WTC11 (cell line): ENCODE measurements at regions of chr22 and their contacts with region 1.

Region 1: GRCh38 chr22:46367707-46368191 is 32.2 kb downstream of the TRMU start:
- DNase-seq: peak; percentile 94
- ATAC-seq: peak; percentile 87
- H3K4me3 Mint-ChIP-seq: no peak overlapping the region
- H3K27ac Mint-ChIP-seq: no peak overlapping the region; the same call in 1 of the 2 replicates
- H3K4me1 Mint-ChIP-seq: peaks cover 6% of the 10 kb centered on the region; the same call in 1 of the 2 replicates
- H3K27me3 Mint-ChIP-seq: no peaks in the 10 kb centered on the region
- CTCF ChIP-seq: peak; percentile 85

Region 2: DNA sequence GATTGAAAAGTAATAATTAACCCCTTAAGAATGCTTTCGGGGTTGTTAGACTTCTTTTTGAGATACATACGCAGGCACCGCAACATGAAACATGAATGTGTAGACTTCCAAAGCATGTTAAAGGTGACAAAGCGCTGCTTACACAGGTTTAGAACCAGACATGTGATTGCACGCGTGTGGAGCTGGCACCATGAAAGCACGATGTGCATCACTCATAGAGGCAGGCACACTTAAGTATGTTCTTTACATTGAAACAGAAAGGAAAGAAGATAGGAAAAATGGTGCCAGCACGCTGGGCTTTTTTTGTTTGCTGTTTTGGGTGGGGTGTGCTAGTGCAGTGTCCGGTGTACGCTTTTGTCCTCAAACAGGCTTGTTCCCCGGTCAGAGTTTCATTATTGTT is 301.1 kb before region 1 on chr22:
- CTCF ChIA-PET with region 1: no interaction called
- POLR2A ChIA-PET with region 1: no interaction called
- DNase-seq: no peak
- ATAC-seq: no peak
- H3K4me3 Mint-ChIP-seq: no peak overlapping the region
- H3K27ac Mint-ChIP-seq: no peak overlapping the region
- H3K4me1 Mint-ChIP-seq: peaks cover 7% of the 10 kb centered on the region
- H3K27me3 Mint-ChIP-seq: peaks cover 73% of the 10 kb centered on the region
- CTCF ChIP-seq: no peak

Region 3: DNA sequence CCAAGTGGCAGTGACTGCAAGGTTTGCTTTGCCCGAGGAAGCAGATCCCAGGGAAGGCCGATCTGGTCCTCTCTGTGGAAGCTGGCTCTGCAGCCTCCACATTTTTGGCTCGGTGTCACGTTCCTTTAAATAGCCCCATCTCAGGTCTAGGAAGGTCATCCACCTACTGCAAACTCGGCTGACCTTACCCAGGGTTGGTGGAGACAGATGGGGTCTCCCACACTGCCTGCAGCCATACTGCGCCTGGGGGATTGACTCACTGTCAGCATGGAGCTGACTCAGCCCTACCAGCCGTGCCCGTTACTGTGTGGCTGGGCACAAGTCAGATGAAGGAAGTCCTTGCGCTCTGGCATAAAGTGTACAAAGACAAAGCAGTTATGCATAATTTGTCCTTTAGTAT is 134.5 kb before region 1 on chr22:
- CTCF ChIA-PET with region 1: no interaction called
- POLR2A ChIA-PET with region 1: no interaction called
- DNase-seq: no peak
- ATAC-seq: no peak
- H3K4me3 Mint-ChIP-seq: no peak overlapping the region
- H3K27ac Mint-ChIP-seq: 0 out of 2 replicates have a peak overlapping the region, but pooled peaks have one; percentile 18
- H3K4me1 Mint-ChIP-seq: no peaks in the 10 kb centered on the region
- H3K27me3 Mint-ChIP-seq: no peaks in the 10 kb centered on the region
- CTCF ChIP-seq: no peak

Region 4: GRCh38 chr22:46328782-46329181 is 39.0 kb before region 1 on chr22:
- CTCF ChIA-PET with region 1: no interaction called
- POLR2A ChIA-PET with region 1: no interaction called
- DNase-seq: no peak
- ATAC-seq: no peak
- H3K4me3 Mint-ChIP-seq: no peak overlapping the region
- H3K27ac Mint-ChIP-seq: no peak overlapping the region
- H3K4me1 Mint-ChIP-seq: 0 out of 2 replicates have a peak, but pooled peaks cover 3% of the 10 kb centered on the region
- H3K27me3 Mint-ChIP-seq: no peaks in the 10 kb centered on the region
- CTCF ChIP-seq: no peak

Region 5: DNA sequence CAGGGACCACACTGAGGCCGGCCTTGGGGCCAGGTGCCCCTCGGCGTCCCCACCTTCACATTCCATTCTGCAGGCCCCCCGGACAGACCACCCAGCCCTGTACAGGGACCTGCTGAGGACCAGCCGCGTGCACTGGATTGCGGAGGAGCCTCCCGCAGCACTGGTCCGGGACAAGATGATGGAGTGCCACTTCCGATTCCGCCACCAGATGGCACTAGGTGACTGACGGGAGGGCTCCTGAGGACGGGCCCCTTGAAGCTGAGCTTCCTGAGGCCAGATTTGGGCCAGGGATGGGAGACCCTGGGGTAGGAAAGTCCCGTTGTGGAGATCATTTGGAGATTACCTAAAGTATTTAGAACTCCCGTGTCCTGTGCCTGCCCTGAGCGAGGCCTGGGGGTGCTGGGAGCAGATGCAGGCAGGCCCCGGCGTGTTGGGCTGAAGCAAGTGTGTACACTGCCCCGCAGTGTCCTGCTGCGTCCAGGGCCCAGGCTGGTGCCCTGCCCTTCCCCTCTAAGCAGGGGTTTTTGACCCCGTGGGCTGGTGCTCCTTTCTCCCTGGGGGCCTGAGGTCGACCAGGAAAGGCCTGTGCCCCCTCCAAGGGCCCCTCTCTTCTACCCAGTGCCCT is 12.3 kb before region 1 on chr22:
- CTCF ChIA-PET with region 1: interaction called, 34 read pairs
- POLR2A ChIA-PET with region 1: interaction called, 4 read pairs
- DNase-seq: peak; percentile 92
- ATAC-seq: peak; percentile 82
- H3K4me3 Mint-ChIP-seq: no peak overlapping the region
- H3K27ac Mint-ChIP-seq: no peak overlapping the region
- H3K4me1 Mint-ChIP-seq: no peaks in the 10 kb centered on the region
- H3K27me3 Mint-ChIP-seq: no peaks in the 10 kb centered on the region
- CTCF ChIP-seq: peak; percentile 82

Region 6: GRCh38 chr22:46413725-46414379 is 46.1 kb after region 1 on chr22:
- CTCF ChIA-PET with region 1: interaction called, 10 read pairs
- POLR2A ChIA-PET with region 1: no interaction called
- DNase-seq: no peak
- ATAC-seq: no peak
- H3K4me3 Mint-ChIP-seq: no peak overlapping the region
- H3K27ac Mint-ChIP-seq: peak overlapping the region; percentile 11; the same call in 1 of the 2 replicates
- H3K4me1 Mint-ChIP-seq: peaks cover 3% of the 10 kb centered on the region; the same call in 1 of the 2 replicates
- H3K27me3 Mint-ChIP-seq: no peaks in the 10 kb centered on the region
- CTCF ChIP-seq: no peak

Region 7: GRCh38 chr22:46457524-46458488 is 90.1 kb after region 1 on chr22:
- CTCF ChIA-PET with region 1: interaction called, 10 read pairs
- POLR2A ChIA-PET with region 1: no interaction called
- DNase-seq: no peak
- ATAC-seq: no peak
- H3K4me3 Mint-ChIP-seq: no peak overlapping the region
- H3K27ac Mint-ChIP-seq: peak overlapping the region; percentile 90
- H3K4me1 Mint-ChIP-seq: no peaks in the 10 kb centered on the region
- H3K27me3 Mint-ChIP-seq: no peaks in the 10 kb centered on the region
- CTCF ChIP-seq: no peak

Region 8: GRCh38 chr22:46522797-46523196 is 155.0 kb after region 1 on chr22:
- CTCF ChIA-PET with region 1: interaction called, 11 read pairs
- POLR2A ChIA-PET with region 1: no interaction called
- DNase-seq: no peak
- ATAC-seq: peak; percentile 28; the same call in 1 of the 2 replicates
- H3K4me3 Mint-ChIP-seq: no peak overlapping the region
- H3K27ac Mint-ChIP-seq: no peak overlapping the region
- H3K4me1 Mint-ChIP-seq: 0 out of 2 replicates have a peak, but pooled peaks cover 7% of the 10 kb centered on the region
- H3K27me3 Mint-ChIP-seq: no peaks in the 10 kb centered on the region
- CTCF ChIP-seq: no peak

Region 9: GRCh38 chr22:46563381-46564083 is 195.8 kb after region 1 on chr22:
- CTCF ChIA-PET with region 1: interaction called, 45 read pairs
- POLR2A ChIA-PET with region 1: no interaction called
- DNase-seq: peak; percentile 82
- ATAC-seq: peak; percentile 92
- H3K4me3 Mint-ChIP-seq: peak overlapping the region; percentile 18
- H3K27ac Mint-ChIP-seq: peak overlapping the region; percentile 79
- H3K4me1 Mint-ChIP-seq: peaks cover 6% of the 10 kb centered on the region; the same call in 1 of the 2 replicates
- H3K27me3 Mint-ChIP-seq: no peaks in the 10 kb centered on the region; the same call in 1 of the 2 replicates
- CTCF ChIP-seq: peak; percentile 61

Region 10: DNA sequence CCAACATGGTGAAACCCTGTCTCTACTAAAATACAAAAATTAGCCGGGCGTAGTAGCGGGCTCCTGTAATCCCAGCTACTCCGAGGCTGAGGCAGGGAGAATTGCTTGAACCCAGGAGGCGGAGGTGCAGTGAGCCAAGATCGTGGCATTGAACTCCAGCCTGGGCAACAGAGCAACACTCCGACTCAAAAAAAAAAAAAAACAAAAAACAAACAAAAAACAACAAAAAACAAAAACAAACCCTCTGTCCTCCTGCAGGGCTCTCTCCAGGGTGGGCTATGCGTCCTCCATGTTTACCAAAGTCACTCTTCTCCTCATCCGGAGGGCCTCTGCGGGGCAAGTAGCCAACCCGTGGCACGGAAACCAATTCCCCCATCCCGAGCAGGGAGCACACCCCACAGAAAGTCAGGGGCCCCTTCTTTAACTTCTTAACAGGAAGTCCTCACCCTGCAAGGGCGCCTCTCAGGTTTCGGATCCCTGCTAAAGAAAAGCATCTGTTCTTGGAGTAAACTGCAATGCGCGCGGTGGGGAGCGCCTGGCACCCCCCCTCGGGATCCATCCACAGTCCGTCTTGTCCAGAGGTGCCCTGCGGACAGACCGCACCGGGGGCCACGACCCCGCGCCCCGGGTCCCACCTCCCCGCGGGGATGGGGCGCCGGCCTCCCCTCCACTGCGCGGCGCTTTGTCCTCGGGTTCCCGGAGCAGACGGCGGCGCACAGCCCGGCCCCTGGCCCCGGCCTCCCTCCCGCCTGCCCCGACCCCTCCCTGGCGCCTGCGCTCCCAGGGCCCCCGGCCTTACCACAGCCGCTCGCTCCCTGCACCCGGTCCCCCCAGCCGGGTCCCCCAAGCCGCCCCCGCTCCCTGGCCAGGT is 369.6 kb after region 1 on chr22:
- CTCF ChIA-PET with region 1: no interaction called
- POLR2A ChIA-PET with region 1: no interaction called
- DNase-seq: peak; percentile 58
- ATAC-seq: peak; percentile 37
- H3K4me3 Mint-ChIP-seq: peak overlapping the region; percentile 89
- H3K27ac Mint-ChIP-seq: peak overlapping the region; percentile 83; the same call in 1 of the 2 replicates
- H3K4me1 Mint-ChIP-seq: peaks cover 31% of the 10 kb centered on the region
- H3K27me3 Mint-ChIP-seq: no peaks in the 10 kb centered on the region; the same call in 1 of the 2 replicates
- CTCF ChIP-seq: no peak